ENCODE measurements at regions of chr2 and their contacts with region 1.

Region 1: DNA sequence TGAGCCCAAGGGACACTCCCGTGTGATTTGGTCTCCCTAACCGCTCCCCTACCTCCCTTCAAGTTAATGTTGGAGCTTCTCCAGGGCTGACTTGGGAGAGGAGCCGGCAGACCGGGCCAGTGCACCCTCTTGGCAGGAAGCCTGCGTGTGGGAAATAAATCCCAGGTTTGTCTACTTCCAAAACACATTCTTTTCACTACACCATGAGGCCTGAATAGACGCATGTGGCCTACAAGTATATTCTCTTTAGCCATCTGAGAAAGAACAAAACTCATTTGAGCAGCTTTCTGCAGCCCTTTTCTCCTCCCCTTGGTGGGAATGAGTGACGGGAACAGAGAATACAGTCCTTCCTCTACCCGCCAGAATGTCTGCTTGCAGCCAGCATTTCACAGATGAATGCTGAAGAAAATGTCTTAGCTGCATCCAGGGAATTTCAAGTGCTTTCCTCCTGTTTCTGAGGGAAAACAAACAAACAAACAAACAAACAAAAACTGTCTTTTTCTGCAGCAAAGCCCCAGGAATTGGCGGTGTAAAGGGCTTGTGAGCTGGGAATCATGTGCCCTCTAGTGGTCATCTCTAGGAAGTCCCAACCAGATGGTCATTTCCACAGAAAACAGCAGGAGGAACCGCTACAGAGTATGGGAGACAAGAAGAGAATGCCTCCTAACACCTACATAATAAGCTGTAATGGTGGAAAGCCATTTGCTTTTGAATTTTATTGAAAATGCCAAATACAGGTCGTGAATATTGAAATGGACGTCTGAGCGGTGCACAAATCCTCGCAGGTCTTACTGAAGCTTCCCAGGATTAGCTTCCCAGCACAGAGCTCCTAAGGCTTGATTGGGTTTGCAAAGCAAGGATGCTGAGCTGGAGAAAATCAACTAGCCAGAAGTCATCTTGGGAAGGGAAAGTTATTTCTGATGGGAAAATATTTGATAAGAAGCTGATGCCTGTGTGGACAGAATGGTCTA is 41.2 kb upstream of the DAPL1 start:
- DNase-seq: peak; percentile 17 to 56
- H3K4me3 ChIP-seq: peak overlapping the region in 1 of 4 experiments; percentile 39; a peak in 1 of 8 replicates
- H3K27ac ChIP-seq: no peak overlapping the region
- H3K4me1 ChIP-seq: peaks cover 0 to 2% (median 0%) of the 10 kb centered on the region in 4 experiments; a peak in 1 of 7 replicates
- H3K27me3 ChIP-seq: no peaks in the 10 kb centered on the region
- CTCF ChIP-seq: peak; percentile 50 to 88 (median 88)
- EP300 ChIP-seq: no peak
- POLR2A ChIP-seq: no peak
- RAD21 ChIP-seq: peak; percentile 87 to 89

Region 2: GRCh38 chr2:157857881-157858280 is 896.0 kb before region 1 on chr2:
- CTCF ChIA-PET with region 1: no interaction called
- POLR2A ChIA-PET with region 1: no interaction called
- DNase-seq: no peak
- H3K4me3 ChIP-seq: no peak overlapping the region
- H3K27ac ChIP-seq: no peak overlapping the region
- H3K4me1 ChIP-seq: peaks cover 0 to 4% (median 0%) of the 10 kb centered on the region in 4 experiments; a peak in 1 of 7 replicates
- H3K27me3 ChIP-seq: no peaks in the 10 kb centered on the region
- CTCF ChIP-seq: no peak
- EP300 ChIP-seq: no peak
- POLR2A ChIP-seq: no peak
- RAD21 ChIP-seq: no peak

Region 3: GRCh38 chr2:158024288-158024898 is 729.5 kb before region 1 on chr2:
- CTCF ChIA-PET with region 1: interaction called, 36 read pairs
- POLR2A ChIA-PET with region 1: no interaction called
- DNase-seq: peak in 1 of 2 experiments; percentile 79
- H3K4me3 ChIP-seq: no peak overlapping the region
- H3K27ac ChIP-seq: no peak overlapping the region
- H3K4me1 ChIP-seq: no peaks in the 10 kb centered on the region
- H3K27me3 ChIP-seq: peaks cover 0 to 4% (median 0%) of the 10 kb centered on the region in 4 experiments; a peak in 1 of 7 replicates
- CTCF ChIP-seq: peak; percentile 57 to 69 (median 68)
- EP300 ChIP-seq: no peak
- POLR2A ChIP-seq: no peak
- RAD21 ChIP-seq: peak; percentile 79 to 87

Region 4: GRCh38 chr2:158189526-158189925 is 564.4 kb before region 1 on chr2:
- CTCF ChIA-PET with region 1: interaction called, 11 read pairs
- POLR2A ChIA-PET with region 1: no interaction called
- DNase-seq: no peak
- H3K4me3 ChIP-seq: no peak overlapping the region
- H3K27ac ChIP-seq: no peak overlapping the region
- H3K4me1 ChIP-seq: peaks cover 0 to 4% (median 0%) of the 10 kb centered on the region in 4 experiments; a peak in 1 of 7 replicates
- H3K27me3 ChIP-seq: no peaks in the 10 kb centered on the region
- CTCF ChIP-seq: no peak
- EP300 ChIP-seq: no peak
- POLR2A ChIP-seq: no peak
- RAD21 ChIP-seq: no peak

Region 5: DNA sequence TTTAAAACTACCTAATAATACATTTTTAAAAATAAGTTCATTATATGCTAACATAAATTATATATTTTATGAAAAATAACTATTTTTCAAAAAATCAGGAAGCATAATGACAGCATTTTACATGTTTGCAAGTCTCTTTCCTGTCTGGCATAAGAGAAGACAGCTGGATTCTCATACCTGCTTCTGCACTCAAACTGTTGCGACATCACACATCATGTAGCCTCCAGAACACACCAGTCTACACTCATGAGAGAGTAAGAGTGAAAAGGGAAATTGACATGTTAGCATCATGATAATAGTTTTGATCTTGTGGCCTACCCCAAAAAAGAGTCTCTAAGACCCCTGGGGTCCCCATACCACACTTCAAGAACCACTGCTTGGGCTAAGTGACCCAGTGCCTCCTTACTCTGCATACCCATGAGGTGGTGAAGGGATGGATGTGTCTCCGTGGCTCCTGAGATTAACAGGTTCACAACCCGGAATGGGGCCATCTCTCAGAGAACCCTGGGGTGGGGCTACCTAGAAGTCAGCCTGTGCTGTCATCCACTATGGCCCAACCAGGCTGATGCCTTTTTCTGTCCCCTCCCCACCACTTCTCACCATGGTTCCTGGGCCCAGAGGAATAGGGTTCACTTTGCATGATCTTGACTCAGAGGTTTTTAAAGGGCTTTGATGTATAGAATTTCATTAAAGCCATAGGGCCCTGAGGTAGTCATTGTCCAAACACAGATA is 61.4 kb before region 1 on chr2:
- CTCF ChIA-PET with region 1: interaction called, 27 read pairs
- POLR2A ChIA-PET with region 1: no interaction called
- DNase-seq: no peak
- H3K4me3 ChIP-seq: no peak overlapping the region
- H3K27ac ChIP-seq: no peak overlapping the region
- H3K4me1 ChIP-seq: no peaks in the 10 kb centered on the region; a peak in 2 of 7 replicates
- H3K27me3 ChIP-seq: no peaks in the 10 kb centered on the region
- CTCF ChIP-seq: no peak
- EP300 ChIP-seq: no peak
- POLR2A ChIP-seq: no peak
- RAD21 ChIP-seq: no peak

Region 6: GRCh38 chr2:158733430-158733755 is 20.5 kb before region 1 on chr2:
- CTCF ChIA-PET with region 1: interaction called, 416 read pairs
- POLR2A ChIA-PET with region 1: no interaction called
- DNase-seq: no peak
- H3K4me3 ChIP-seq: no peak overlapping the region
- H3K27ac ChIP-seq: no peak overlapping the region
- H3K4me1 ChIP-seq: no peaks in the 10 kb centered on the region
- H3K27me3 ChIP-seq: no peaks in the 10 kb centered on the region; a peak in 1 of 7 replicates
- CTCF ChIP-seq: no peak
- EP300 ChIP-seq: no peak
- POLR2A ChIP-seq: no peak
- RAD21 ChIP-seq: no peak

Region 7: GRCh38 chr2:158795195-158795924 is 41.4 kb after region 1 on chr2 and contains the start of gene DAPL1:
- CTCF ChIA-PET with region 1: interaction called, 11 read pairs
- POLR2A ChIA-PET with region 1: no interaction called
- DNase-seq: no peak
- H3K4me3 ChIP-seq: no peak within 1 kb of the TSS
- H3K27ac ChIP-seq: no peak within 1 kb of the TSS
- H3K4me1 ChIP-seq: peaks cover 0 to 7% (median 3%) of the 10 kb centered on the region in 4 experiments; a peak in 3 of 7 replicates
- H3K27me3 ChIP-seq: no peaks in the 10 kb centered on the region; a peak in 1 of 7 replicates
- CTCF ChIP-seq: no peak
- EP300 ChIP-seq: no peak
- POLR2A ChIP-seq: no peak
- RAD21 ChIP-seq: no peak
- total RNA-seq, gene DAPL1: not detected in 2 replicates

Region 8: GRCh38 chr2:159002462-159003111 is 248.7 kb after region 1 on chr2:
- CTCF ChIA-PET with region 1: no interaction called
- POLR2A ChIA-PET with region 1: no interaction called
- DNase-seq: no peak
- H3K4me3 ChIP-seq: no peak overlapping the region
- H3K27ac ChIP-seq: no peak overlapping the region
- H3K4me1 ChIP-seq: no peaks in the 10 kb centered on the region
- H3K27me3 ChIP-seq: no peaks in the 10 kb centered on the region
- CTCF ChIP-seq: no peak
- EP300 ChIP-seq: no peak
- POLR2A ChIP-seq: no peak
- RAD21 ChIP-seq: no peak

Measured in H1 (cell line).